HEK293T (cell line): ENCODE measurements at regions of chr12 and their contacts with region 1.

Region 1: DNA sequence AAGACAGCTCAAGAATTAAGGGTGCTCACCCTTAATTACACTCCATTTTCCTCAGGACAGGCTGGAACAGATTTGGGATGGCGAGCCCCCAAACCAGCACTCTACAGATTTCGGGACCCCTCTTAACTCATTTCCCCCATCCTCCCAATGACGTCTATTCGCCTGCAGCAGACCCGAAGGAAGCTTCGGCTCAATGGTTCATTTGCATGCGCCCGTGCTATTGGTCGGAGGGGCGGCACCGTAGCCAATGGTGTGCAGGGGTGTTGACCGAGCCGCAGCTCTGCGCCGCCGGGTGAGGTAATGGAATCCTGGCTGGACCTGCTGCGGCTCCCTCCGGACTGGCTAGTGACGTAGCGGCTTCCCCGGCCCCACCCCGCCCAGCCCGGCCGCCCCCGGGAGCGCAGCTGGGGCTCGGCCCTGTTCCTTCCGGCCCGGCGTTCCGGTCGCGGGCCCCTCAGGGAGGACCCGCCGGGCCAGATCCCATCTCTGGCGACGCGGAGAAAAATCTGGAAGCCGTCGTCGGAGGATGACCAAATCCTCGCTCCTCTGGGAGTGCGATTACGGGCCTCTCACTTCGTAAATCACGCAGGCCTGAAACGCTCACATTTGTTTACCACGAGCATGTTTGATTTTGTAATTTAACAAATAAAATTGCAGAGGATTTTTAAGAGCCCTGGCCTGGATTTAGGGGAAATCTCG is 18.3 kb upstream of the NR4A1 start:
- DNase-seq: peak; percentile 92

Region 2: GRCh38 chr12:52050761-52051541 is 18.0 kb after region 1 on chr12 and contains the start of gene NR4A1:
- CTCF ChIA-PET with region 1: interaction called, 3 read pairs
- POLR2A ChIA-PET with region 1: interaction called, 11 read pairs
- DNase-seq: peak; percentile 87

Region 3: GRCh38 chr12:52069327-52070184 is 36.6 kb after region 1 on chr12 and contains the start of gene ATG101:
- CTCF ChIA-PET with region 1: no interaction called
- POLR2A ChIA-PET with region 1: interaction called, 22 read pairs
- DNase-seq: peak; percentile 94